Mammary epithelial cell (primary cell): ENCODE measurements at regions of chr9 and their contacts with region 1.

Region 1: GRCh38 chr9:2872257-2872935 is 28.5 kb upstream of the PUM3 start:
- DNase-seq: peak; percentile 8
- H3K4me3 ChIP-seq: no peak overlapping the region
- H3K27ac ChIP-seq: no peak overlapping the region
- H3K4me1 ChIP-seq: no peaks in the 10 kb centered on the region
- H3K27me3 ChIP-seq: peaks cover 5% of the 10 kb centered on the region
- CTCF ChIP-seq: peak; percentile 10 to 34

Region 2: GRCh38 chr9:2816476-2817141 is 55.8 kb before region 1 on chr9:
- CTCF ChIA-PET with region 1: no interaction called
- dilution Hi-C with region 1: no loop called
- in situ Hi-C with region 1: no loop called
- intact Hi-C with region 1: no loop called
- DNase-seq: no peak
- H3K4me3 ChIP-seq: no peak overlapping the region
- H3K27ac ChIP-seq: no peak overlapping the region
- H3K4me1 ChIP-seq: no peaks in the 10 kb centered on the region
- H3K27me3 ChIP-seq: no peaks in the 10 kb centered on the region
- CTCF ChIP-seq: no peak

Region 3: DNA sequence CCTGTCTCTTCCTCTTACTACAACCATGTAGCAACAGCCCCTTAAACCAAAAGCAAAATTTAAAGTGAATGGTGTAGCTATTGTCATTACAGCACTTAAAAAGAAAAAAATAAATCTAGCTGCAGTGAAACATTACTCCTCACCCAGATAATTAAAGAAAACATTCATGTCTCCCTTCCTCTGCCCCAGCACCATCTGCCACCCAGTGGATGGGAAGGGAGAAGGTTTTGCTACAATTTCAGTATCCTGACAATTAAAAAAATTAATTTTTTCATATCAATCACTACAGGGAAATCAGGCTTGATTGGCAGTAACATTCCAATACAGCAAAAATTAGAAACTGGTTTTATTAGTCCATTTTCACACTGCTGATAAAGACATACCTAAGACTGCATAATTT is 118.9 kb after region 1 on chr9:
- CTCF ChIA-PET with region 1: no interaction called
- dilution Hi-C with region 1: no loop called
- in situ Hi-C with region 1: no loop called
- intact Hi-C with region 1: loop called (anchors 2 kb)
- DNase-seq: no peak
- H3K4me3 ChIP-seq: no peak overlapping the region
- H3K27ac ChIP-seq: no peak overlapping the region
- H3K4me1 ChIP-seq: no peaks in the 10 kb centered on the region
- H3K27me3 ChIP-seq: no peaks in the 10 kb centered on the region
- CTCF ChIP-seq: peak; percentile 10 to 34

Region 4: DNA sequence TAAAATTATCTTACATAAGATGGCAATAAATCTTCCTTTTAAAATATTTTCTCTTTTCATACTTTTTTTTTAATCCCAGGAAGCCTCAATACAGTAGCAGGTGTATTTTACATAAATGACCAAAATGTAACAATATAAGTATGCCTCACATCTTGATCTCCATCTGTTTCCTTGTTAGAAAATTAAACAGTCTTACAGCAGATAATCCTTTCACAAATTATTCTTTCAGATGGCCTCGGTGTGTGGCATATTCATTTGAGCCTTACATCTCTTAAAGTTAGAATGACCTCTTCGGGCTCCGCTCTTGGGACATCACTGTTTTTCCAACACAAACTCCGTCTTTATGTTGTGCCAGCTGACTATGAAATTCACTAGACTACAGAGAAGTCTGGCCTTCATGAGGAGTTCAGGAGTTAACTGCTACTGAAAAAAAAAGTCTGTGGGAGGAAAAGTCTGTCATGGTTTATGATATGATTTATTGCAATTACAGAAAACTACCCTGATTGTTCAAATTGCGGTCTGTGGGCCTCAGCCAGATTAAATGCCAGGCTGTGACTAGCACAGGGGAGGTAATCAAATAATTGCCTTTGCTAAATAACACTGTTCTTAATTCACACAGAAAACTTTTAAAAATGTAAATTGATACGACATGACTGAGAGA is 264.4 kb after region 1 on chr9:
- CTCF ChIA-PET with region 1: no interaction called
- dilution Hi-C with region 1: no loop called
- in situ Hi-C with region 1: no loop called
- intact Hi-C with region 1: loop called (anchors 5 kb)
- DNase-seq: peak; percentile 2
- H3K4me3 ChIP-seq: no peak overlapping the region
- H3K27ac ChIP-seq: no peak overlapping the region
- H3K4me1 ChIP-seq: no peaks in the 10 kb centered on the region
- H3K27me3 ChIP-seq: no peaks in the 10 kb centered on the region
- CTCF ChIP-seq: no peak

Region 5: GRCh38 chr9:3181049-3181953 is 308.9 kb after region 1 on chr9:
- CTCF ChIA-PET with region 1: no interaction called
- dilution Hi-C with region 1: no loop called
- in situ Hi-C with region 1: loop called in 1 of 2 experiments (anchors 5 kb)
- intact Hi-C with region 1: loop called (anchors 1 kb)
- DNase-seq: peak; percentile 60
- H3K4me3 ChIP-seq: peak overlapping the region in 2 of 3 experiments; percentile 24 to 26
- H3K27ac ChIP-seq: no peak overlapping the region
- H3K4me1 ChIP-seq: no peaks in the 10 kb centered on the region
- H3K27me3 ChIP-seq: peaks cover 20% of the 10 kb centered on the region
- CTCF ChIP-seq: peak; percentile 38 to 68

Region 6: DNA sequence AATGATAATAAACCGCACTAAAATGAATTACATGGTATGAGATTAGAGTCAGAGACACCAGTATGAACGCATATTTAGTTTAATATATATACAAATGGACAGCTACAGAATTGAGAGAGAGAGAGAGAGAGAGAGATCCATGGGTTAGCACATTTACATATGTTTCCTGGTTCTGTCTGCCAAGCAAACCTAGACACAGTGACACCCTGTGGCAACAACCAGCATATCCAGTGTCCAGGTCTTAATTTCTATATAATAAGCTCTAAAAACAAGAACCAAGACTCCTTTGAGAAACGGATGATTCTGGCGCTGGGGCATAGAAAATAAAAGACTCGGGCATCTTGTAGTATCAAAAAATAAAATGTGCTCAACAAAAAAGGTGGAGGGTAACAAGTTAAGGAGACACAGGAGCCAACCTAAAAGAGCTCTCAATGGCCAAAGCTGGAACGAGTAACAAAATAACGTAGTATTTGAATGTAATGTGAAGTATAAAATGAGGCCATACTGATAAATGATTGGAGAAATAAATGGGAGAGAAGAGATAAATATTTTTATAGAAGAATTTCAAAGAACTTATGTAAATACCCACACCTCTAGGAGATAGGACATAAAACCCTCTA is 568.9 kb after region 1 on chr9:
- CTCF ChIA-PET with region 1: interaction called, 3 read pairs
- dilution Hi-C with region 1: no loop called
- in situ Hi-C with region 1: loop called (anchors 25 kb)
- intact Hi-C with region 1: loop called (anchors 1 kb)
- DNase-seq: peak; percentile 45
- H3K4me3 ChIP-seq: no peak overlapping the region
- H3K27ac ChIP-seq: no peak overlapping the region
- H3K4me1 ChIP-seq: no peaks in the 10 kb centered on the region
- H3K27me3 ChIP-seq: no peaks in the 10 kb centered on the region
- CTCF ChIP-seq: peak; percentile 73 to 74